Activated CD4-positive, alpha-beta memory T cell treated with anti-CD3 and anti-CD28 coated beads, Interleukin-2, amount 10 ng/mL, durations not matched to agents 7 days and 5 days (primary cell): ENCODE measurements at regions of chr9 and their contacts with region 1.

Region 1: GRCh38 chr9:121322037-121322775 is 47.8 kb downstream of the STOM start:
- DNase-seq: no peak
- H3K4me3 Mint-ChIP-seq: no peak overlapping the region
- H3K27ac Mint-ChIP-seq: no peak overlapping the region
- H3K4me1 Mint-ChIP-seq: peaks cover 36% of the 10 kb centered on the region
- H3K27me3 Mint-ChIP-seq: no peaks in the 10 kb centered on the region

Region 2: DNA sequence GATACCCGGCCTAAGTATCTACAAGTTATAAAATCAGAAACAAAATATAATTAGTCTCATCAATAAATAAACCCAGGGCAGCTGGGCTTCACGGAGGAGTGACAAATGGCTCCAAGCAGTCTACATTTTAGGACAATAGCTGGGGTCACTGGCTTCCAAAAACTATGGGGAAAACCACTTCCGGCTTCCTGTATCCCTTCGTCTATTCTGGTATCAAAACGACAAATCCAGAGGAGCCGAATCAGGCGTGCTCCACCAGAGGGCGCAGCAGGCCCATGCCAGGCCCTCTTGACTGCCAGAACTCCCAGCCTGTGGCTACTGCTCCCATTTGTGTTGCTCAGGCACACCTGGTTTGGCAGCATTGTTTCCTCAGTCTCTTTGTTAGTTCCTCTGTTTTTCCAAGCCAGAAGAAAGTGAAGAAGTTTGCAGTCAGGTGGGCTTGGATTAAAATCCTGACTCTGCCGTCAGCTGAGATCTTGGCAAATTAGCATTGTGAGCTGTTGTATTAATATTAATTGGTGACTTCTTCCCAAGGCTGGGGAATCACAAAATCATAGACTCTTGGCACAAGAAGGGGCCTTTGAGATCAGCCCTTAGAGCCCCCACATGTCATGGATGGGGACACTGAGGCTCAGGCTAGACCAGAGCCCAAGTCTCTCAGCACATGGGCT is 108.9 kb before region 1 on chr9:
- CTCF ChIA-PET with region 1: interaction called, 25 read pairs
- POLR2A ChIA-PET with region 1: no interaction called
- DNase-seq: peak; percentile 72
- H3K4me3 Mint-ChIP-seq: no peak overlapping the region
- H3K27ac Mint-ChIP-seq: peak overlapping the region; percentile 19
- H3K4me1 Mint-ChIP-seq: peaks cover 26% of the 10 kb centered on the region
- H3K27me3 Mint-ChIP-seq: no peaks in the 10 kb centered on the region

Region 3: DNA sequence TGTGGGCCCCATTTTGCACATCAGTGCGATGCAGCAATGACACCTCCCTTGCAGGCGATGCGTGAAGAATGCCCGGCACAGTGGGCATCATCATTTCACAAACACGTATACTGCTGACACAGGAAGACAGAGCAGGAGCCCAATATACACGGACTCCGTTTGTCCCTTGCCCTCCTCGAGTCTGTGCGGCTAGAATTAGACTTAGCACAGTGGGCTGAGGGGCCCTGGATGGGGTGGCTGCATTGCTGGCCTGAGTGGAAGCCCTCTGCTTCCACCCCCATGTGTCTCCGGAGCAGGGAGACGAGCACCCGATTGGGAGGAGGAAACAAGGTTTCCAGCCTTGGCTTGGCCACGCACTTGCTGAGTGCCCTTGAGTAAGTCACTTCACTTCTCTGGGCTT is 13.4 kb before region 1 on chr9:
- CTCF ChIA-PET with region 1: interaction called, 11 read pairs
- POLR2A ChIA-PET with region 1: no interaction called
- DNase-seq: no peak
- H3K4me3 Mint-ChIP-seq: no peak overlapping the region
- H3K27ac Mint-ChIP-seq: no peak overlapping the region
- H3K4me1 Mint-ChIP-seq: no peaks in the 10 kb centered on the region
- H3K27me3 Mint-ChIP-seq: no peaks in the 10 kb centered on the region

Region 4: DNA sequence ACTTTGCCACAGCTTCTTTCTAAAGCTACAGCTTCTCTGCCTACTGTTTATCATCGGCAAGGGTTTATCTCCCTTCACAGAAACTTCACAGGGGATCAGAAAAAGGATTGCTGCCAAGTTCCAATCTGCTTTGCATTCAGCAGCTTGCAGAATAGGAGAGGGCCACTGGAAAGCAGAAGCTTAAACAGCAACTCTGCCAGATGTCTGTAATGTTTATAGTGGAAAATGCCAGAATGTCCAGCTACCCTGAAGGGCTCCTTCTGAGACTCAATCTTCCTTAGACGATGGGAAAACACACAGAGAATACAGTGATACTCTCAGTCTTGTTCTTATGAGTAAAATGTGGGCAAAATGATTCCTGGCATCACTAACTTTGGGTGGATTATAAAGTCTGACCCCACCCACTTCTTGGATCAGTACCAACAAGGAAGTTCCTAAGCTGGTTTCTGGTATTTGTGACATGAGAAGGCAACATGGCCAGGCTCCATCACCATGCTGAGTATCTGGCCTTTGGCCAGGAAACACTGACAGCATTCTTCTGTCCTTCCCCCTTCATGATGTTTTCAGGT is 28.9 kb after region 1 on chr9:
- CTCF ChIA-PET with region 1: interaction called, 21 read pairs
- POLR2A ChIA-PET with region 1: interaction called, 5 read pairs
- DNase-seq: no peak
- H3K4me3 Mint-ChIP-seq: no peak overlapping the region
- H3K27ac Mint-ChIP-seq: no peak overlapping the region
- H3K4me1 Mint-ChIP-seq: peaks cover 40% of the 10 kb centered on the region
- H3K27me3 Mint-ChIP-seq: no peaks in the 10 kb centered on the region

Region 5: GRCh38 chr9:121376214-121376830 is 54.1 kb after region 1 on chr9:
- CTCF ChIA-PET with region 1: interaction called, 189 read pairs
- POLR2A ChIA-PET with region 1: no interaction called
- DNase-seq: no peak
- H3K4me3 Mint-ChIP-seq: no peak overlapping the region
- H3K27ac Mint-ChIP-seq: no peak overlapping the region
- H3K4me1 Mint-ChIP-seq: peaks cover 19% of the 10 kb centered on the region
- H3K27me3 Mint-ChIP-seq: peaks cover 7% of the 10 kb centered on the region

Region 6: DNA sequence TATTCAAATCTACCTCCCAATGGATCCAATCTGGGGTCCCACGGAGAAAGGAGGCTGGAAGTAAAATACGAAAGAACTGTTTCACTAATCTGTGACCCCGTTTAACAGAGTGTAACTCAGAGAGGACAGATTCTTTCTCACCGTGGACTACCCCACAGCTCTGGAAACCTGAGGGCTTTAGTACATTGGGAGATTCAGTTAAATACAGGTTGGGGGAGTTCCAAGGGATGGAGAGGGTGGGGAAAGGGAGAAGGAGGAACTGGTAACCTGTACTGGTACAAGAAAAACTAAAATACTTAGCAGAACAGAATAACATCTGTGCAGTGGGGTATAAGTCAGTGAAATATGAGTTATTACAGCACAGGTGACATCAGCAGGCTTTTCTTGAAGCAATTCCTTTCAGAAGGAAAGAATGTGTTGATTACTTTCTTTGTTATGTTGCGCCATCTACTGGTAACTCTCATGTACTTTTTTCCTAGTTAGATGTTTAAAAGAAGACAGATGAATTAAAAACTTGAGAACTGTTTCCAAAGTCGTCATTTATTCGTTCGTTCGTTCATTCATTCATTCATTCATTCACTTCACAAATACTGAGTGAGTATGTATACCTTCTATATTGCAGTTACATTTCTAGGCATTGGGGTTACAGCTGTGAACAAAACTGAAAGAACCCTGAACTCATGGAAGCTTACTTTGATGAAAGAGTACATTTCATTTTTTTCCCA is 77.8 kb after region 1 on chr9:
- CTCF ChIA-PET with region 1: interaction called, 286 read pairs
- POLR2A ChIA-PET with region 1: interaction called, 7 read pairs
- DNase-seq: no peak
- H3K4me3 Mint-ChIP-seq: no peak overlapping the region
- H3K27ac Mint-ChIP-seq: no peak overlapping the region
- H3K4me1 Mint-ChIP-seq: peaks cover 5% of the 10 kb centered on the region
- H3K27me3 Mint-ChIP-seq: peaks cover 16% of the 10 kb centered on the region

Region 7: DNA sequence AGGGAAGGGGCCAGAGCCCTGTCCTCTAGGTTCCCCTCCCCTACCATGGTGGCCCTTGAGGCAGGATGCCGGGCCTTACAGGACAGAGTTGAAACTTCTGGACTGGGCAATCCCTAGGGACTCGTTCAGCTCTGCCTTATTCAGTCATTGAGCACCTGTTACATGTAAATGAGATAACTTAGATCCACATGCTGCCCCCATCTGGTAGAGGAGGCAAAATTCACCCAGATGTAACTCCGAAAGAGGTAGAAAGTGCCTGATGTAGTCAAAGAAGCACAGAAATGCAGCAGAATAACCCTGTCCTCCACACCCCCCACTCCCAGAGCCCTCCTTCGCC is 175.9 kb after region 1 on chr9:
- CTCF ChIA-PET with region 1: interaction called, 11 read pairs
- POLR2A ChIA-PET with region 1: no interaction called
- DNase-seq: peak; percentile 45
- H3K4me3 Mint-ChIP-seq: no peak overlapping the region
- H3K27ac Mint-ChIP-seq: no peak overlapping the region
- H3K4me1 Mint-ChIP-seq: peaks cover 20% of the 10 kb centered on the region
- H3K27me3 Mint-ChIP-seq: peaks cover 50% of the 10 kb centered on the region